Natural killer cell (primary cell): ENCODE measurements at regions of chr11 and their contacts with region 1.

Region 1: DNA sequence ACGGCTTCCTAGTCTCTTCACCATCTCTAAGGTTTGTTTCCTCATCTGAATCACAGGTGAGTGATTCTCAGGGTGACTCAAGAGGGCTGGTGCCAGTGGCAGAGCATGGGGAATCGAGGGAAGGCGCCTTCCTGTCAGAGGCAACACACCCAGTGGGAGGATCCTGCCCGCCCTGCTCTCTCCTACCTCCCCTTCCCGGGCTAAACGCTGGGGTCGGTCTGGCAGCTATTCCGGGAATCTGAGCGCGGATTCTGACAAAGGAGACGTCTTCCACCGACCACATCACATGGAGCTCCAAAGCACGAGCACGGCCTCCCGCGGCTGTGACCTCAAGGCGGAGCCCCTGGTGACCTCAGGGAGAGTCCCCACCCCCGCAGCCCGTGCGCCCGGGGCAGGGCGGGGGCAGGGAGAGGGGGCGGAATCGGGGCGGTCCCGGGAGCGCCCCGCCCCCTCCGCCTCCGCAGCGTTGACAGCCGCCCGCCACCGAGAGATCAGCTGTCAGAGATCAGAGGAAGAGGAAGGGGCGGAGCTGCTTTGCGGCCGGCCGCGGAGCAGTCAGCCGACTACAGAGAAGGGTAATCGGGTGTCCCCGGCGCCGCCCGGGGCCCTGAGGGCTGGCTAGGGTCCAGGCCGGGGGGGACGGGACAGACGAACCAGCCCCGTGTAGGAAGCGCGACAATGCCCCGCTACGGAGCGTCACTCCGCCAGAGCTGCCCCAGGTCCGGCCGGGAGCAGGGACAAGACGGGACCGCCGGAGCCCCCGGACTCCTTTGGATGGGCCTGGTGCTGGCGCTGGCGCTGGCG is at the start of gene SMPD1:
- DNase-seq: peak; percentile 86 to 97
- ATAC-seq: peak; percentile 90 to 98 (median 93)
- H3K4me3 ChIP-seq: peak within 1 kb of the TSS; percentile 72
- H3K4me3 Mint-ChIP-seq: peak within 1 kb of the TSS; percentile 95
- H3K27ac ChIP-seq: peak within 1 kb of the TSS; percentile 87
- H3K27ac Mint-ChIP-seq: peak within 1 kb of the TSS; percentile 96 to 98
- H3K4me1 ChIP-seq: peaks cover 26% of the 10 kb centered on the region
- H3K4me1 Mint-ChIP-seq: peaks cover 42% of the 10 kb centered on the region in 2 donors
- H3K27me3 ChIP-seq: no peaks in the 10 kb centered on the region
- H3K27me3 Mint-ChIP-seq: no peaks in the 10 kb centered on the region
- CTCF ChIP-seq: no peak
- total RNA-seq, gene SMPD1: 52.7 to 63.3 (median 56.1) TPM

Region 2: DNA sequence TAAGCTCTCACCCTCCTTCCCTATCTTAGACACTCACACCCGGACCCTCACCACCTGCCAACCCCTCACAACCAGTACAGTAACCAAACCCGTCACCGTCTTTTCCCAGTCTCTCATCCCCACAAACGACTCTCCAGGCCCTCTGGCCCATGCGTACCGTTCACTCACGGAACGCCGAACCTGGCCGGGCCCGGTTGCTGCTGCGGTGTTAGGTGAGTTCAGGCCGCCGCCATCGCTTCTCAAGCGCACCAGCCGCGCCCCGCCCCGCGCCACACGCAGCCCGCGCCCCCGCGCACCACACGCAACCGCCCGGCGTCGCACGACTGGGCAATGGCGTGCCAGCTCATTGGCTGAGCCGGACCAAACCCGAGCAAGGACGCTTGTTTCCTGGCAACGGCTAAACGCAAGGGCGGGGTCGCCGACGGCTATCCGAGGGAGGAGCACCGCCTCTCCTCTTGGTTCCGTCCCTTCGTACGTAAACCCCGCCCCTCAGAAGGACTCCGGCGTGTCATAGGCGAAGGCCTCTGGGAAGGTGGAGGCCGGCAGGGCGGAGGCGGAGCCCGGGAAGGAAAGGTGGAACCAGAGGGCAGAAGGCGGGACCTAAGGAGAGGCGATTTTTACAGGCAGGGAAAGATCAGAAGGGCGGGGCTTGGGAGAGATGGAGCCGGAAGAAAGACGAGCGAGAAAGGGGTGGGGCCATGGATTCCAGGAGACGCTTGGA is 155.6 kb before region 1 on chr11 and contains the start of gene FHIP1B:
- intact Hi-C with region 1: loop called (anchors 1 kb)
- DNase-seq: peak; percentile 98 to 100
- ATAC-seq: peak; percentile 91 to 98 (median 91)
- H3K4me3 ChIP-seq: peak within 1 kb of the TSS; percentile 98
- H3K4me3 Mint-ChIP-seq: peak within 1 kb of the TSS; percentile 98
- H3K27ac ChIP-seq: peak within 1 kb of the TSS; percentile 91
- H3K27ac Mint-ChIP-seq: peak within 1 kb of the TSS; percentile 89 to 98
- H3K4me1 ChIP-seq: peaks cover 25% of the 10 kb centered on the region
- H3K4me1 Mint-ChIP-seq: peaks cover 51 to 57% of the 10 kb centered on the region in 2 donors
- H3K27me3 ChIP-seq: no peaks in the 10 kb centered on the region
- H3K27me3 Mint-ChIP-seq: no peaks in the 10 kb centered on the region
- CTCF ChIP-seq: no peak
- total RNA-seq, gene FHIP1B: 50.6 to 76.9 (median 58.4) TPM

Region 3: DNA sequence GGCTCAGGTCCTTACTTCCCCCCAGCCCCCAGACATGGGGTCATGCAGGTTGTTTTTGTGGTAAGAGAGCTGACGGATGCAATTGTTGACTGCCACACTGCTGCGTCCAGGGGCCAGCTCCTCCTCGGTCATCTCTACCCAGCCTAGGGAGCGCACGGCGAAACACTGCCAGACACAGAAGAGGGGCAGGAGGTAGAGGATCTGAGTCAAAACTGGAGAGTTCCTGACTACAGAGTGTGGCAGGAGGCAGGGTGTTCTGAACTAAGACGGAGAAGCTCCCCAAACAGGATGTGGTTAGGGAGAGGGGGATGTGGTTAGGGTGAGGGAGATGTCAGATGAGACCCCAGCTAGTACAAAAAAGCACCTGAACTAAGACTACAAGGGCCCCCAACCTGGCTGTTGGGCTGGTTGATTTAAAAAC is 12.4 kb after region 1 on chr11:
- intact Hi-C with region 1: loop called (anchors 1 kb)
- DNase-seq: peak; percentile 28 to 93
- ATAC-seq: peak; percentile 71 to 82 (median 78)
- H3K4me3 ChIP-seq: peak overlapping the region; percentile 4
- H3K4me3 Mint-ChIP-seq: peak overlapping the region; percentile 91
- H3K27ac ChIP-seq: peak overlapping the region; percentile 78
- H3K27ac Mint-ChIP-seq: peak overlapping the region; percentile 96 to 99
- H3K4me1 ChIP-seq: peaks cover 46% of the 10 kb centered on the region
- H3K4me1 Mint-ChIP-seq: peaks cover 44 to 60% of the 10 kb centered on the region in 2 donors
- H3K27me3 ChIP-seq: no peaks in the 10 kb centered on the region
- H3K27me3 Mint-ChIP-seq: no peaks in the 10 kb centered on the region
- CTCF ChIP-seq: no peak

Region 4: GRCh38 chr11:6419009-6419631 is 29.0 kb after region 1 on chr11 and contains the start of gene APBB1:
- intact Hi-C with region 1: loop called (anchors 2 kb)
- DNase-seq: peak; percentile 76 to 90
- ATAC-seq: peak; percentile 84 to 89 (median 84)
- H3K4me3 ChIP-seq: peak within 1 kb of the TSS; percentile 46
- H3K4me3 Mint-ChIP-seq: no peak within 1 kb of the TSS
- H3K27ac ChIP-seq: peak within 1 kb of the TSS; percentile 29
- H3K27ac Mint-ChIP-seq: peak within 1 kb of the TSS in 1 of 2 donors; percentile 62
- H3K4me1 ChIP-seq: peaks cover 32% of the 10 kb centered on the region
- H3K4me1 Mint-ChIP-seq: peaks cover 5% of the 10 kb centered on the region in 2 donors
- H3K27me3 ChIP-seq: peaks cover 3% of the 10 kb centered on the region
- H3K27me3 Mint-ChIP-seq: peaks cover 15 to 31% of the 10 kb centered on the region in 2 donors
- CTCF ChIP-seq: no peak
- total RNA-seq, gene APBB1: 62.8 to 77.1 (median 67.5) TPM

Region 5: GRCh38 chr11:6481012-6481923 is 91.1 kb after region 1 on chr11 and contains the starts of genes ARFIP2 and TIMM10B:
- intact Hi-C with region 1: loop called (anchors 1 kb)
- DNase-seq: peak; percentile 95 to 99
- ATAC-seq: peak; percentile 92 to 98 (median 96)
- H3K4me3 ChIP-seq: peak within 1 kb of the TSS; percentile 74
- H3K4me3 Mint-ChIP-seq: peak within 1 kb of the TSS; percentile 91
- H3K27ac ChIP-seq: peak within 1 kb of the TSS; percentile 95
- H3K27ac Mint-ChIP-seq: peak within 1 kb of the TSS; percentile 95 to 99
- H3K4me1 ChIP-seq: peaks cover 22% of the 10 kb centered on the region
- H3K4me1 Mint-ChIP-seq: peaks cover 32 to 37% of the 10 kb centered on the region in 2 donors
- H3K27me3 ChIP-seq: no peaks in the 10 kb centered on the region
- H3K27me3 Mint-ChIP-seq: no peaks in the 10 kb centered on the region
- CTCF ChIP-seq: no peak
- total RNA-seq, gene ARFIP2: 44.7 to 62.3 (median 51.4) TPM
- total RNA-seq, gene TIMM10B: 69.6 to 92.8 (median 71.4) TPM

Region 6: DNA sequence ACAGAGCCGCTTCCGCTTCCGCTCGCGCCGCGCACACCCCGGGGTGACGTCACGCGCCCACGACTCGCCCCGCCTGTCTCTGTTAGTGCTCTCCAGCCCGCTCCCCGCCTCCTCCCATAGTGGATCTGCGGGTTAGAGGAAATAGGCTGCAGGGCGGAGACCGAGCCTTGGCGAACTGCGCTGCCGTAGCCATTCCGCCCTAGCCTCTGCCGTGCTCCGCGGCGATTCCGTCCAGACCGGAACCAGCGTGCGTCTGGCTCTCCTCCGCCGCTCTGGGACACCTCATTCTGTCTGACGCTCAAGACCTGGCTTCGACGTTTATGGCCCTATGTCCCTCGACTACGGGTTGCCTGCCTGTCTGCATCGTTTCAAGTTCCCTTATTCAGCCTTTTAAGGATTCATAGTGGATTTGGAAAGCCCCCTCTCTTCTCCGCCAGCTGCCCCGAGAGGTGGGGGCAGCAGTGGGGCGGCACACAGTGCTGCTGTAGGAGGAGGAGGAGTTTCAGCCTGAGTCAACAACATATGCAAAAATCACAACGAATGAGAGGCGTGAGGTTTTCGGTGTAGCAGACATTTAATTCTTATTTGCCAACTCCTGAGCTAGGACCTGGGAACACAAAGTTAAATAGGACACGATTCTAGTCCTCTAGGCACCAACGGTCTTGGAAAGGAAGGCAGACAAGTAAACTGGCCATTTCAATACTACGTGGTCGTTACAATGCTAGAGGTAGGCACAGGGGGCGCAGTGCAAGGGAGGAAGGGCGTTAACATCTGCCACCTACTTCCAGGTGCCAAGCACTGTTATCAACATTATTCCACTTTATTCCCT is 222.3 kb after region 1 on chr11 and contains the start of gene TAF10:
- intact Hi-C with region 1: loop called (anchors 10 kb)
- DNase-seq: peak; percentile 93 to 98
- ATAC-seq: peak; percentile 80 to 93 (median 84)
- H3K4me3 ChIP-seq: peak within 1 kb of the TSS; percentile 65
- H3K4me3 Mint-ChIP-seq: peak within 1 kb of the TSS; percentile 84
- H3K27ac ChIP-seq: peak within 1 kb of the TSS; percentile 95
- H3K27ac Mint-ChIP-seq: no peak within 1 kb of the TSS
- H3K4me1 ChIP-seq: peaks cover 49% of the 10 kb centered on the region
- H3K4me1 Mint-ChIP-seq: peaks cover 27 to 38% of the 10 kb centered on the region in 2 donors
- H3K27me3 ChIP-seq: no peaks in the 10 kb centered on the region
- H3K27me3 Mint-ChIP-seq: no peaks in the 10 kb centered on the region
- CTCF ChIP-seq: peak; percentile 45
- total RNA-seq, gene TAF10: 154 to 191 (median 158) TPM